Activated CD8-positive, alpha-beta T cell treated with anti-CD3 and anti-CD28 coated beads for 36 hours (primary cell): ENCODE measurements at regions of chrX and their contacts with region 1.

Region 1: DNA sequence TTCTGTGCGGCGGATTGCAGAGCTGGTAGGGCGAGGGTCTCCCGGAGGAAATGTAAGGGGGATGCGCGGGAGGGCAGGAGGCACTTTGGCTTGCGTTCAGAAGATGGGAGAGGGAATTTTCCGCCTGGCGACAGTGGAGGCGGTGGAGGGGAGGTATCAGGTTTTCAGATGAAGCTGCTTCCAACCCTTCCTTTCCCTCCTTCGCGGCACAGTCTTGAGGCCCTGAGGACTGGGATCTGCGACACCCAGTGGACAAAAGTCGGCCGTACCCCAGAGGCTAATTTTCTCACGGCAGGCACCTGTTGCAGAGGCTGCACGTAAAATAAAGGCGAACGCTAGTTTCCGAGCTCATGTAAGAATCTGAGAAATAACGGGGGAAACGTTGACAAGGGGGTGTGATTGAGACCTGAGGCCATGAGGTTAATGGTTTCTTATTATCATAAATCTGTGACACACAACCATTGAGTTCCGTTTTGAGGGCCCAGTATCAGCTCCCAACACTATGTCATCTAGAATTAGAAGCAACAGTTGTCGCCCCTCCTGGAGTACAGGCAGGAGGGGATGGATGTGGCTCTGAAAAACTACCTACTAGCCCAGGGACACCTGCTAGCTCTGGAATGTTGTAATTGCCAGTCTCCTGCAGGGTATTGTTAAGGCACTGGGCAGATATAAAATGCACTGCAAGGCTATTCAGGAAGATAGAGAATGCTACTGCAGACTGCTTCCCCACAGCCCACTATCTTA is 1.1 kb downstream of the ZCCHC18 start:
- DNase-seq: peak; percentile 71
- ATAC-seq: peak; percentile 57
- H3K4me3 Mint-ChIP-seq: peak overlapping the region; percentile 81
- H3K27ac Mint-ChIP-seq: peak overlapping the region; percentile 89
- H3K4me1 Mint-ChIP-seq: peaks cover 57% of the 10 kb centered on the region
- H3K27me3 Mint-ChIP-seq: no peaks in the 10 kb centered on the region
- CTCF ChIP-seq: peak; percentile 27

Region 2: GRCh38 chrX:104098151-104098808 is 15.1 kb before region 1 on chrX:
- CTCF ChIA-PET with region 1: interaction called, 37 read pairs
- POLR2A ChIA-PET with region 1: interaction called, 6 read pairs
- intact Hi-C with region 1: no loop called
- DNase-seq: peak; percentile 61
- ATAC-seq: peak; percentile 60
- H3K4me3 Mint-ChIP-seq: no peak overlapping the region
- H3K27ac Mint-ChIP-seq: no peak overlapping the region
- H3K4me1 Mint-ChIP-seq: peaks cover 6% of the 10 kb centered on the region
- H3K27me3 Mint-ChIP-seq: no peaks in the 10 kb centered on the region
- CTCF ChIP-seq: peak; percentile 59

Region 3: GRCh38 chrX:104156630-104157529 is 43.5 kb after region 1 on chrX and contains the start of gene SLC25A53:
- CTCF ChIA-PET with region 1: interaction called, 10 read pairs
- POLR2A ChIA-PET with region 1: interaction called, 7 read pairs
- intact Hi-C with region 1: no loop called
- DNase-seq: peak; percentile 87
- ATAC-seq: peak; percentile 94
- H3K4me3 Mint-ChIP-seq: peak within 1 kb of the TSS; percentile 96
- H3K27ac Mint-ChIP-seq: peak within 1 kb of the TSS; percentile 100
- H3K4me1 Mint-ChIP-seq: peaks cover 13% of the 10 kb centered on the region
- H3K27me3 Mint-ChIP-seq: no peaks in the 10 kb centered on the region
- CTCF ChIP-seq: no peak
- total RNA-seq, gene SLC25A53: 4.4 to 4.7 TPM